CD4-positive, alpha-beta T cell (primary cell): ENCODE measurements at regions of chr4 and their contacts with region 1.

Region 1: DNA sequence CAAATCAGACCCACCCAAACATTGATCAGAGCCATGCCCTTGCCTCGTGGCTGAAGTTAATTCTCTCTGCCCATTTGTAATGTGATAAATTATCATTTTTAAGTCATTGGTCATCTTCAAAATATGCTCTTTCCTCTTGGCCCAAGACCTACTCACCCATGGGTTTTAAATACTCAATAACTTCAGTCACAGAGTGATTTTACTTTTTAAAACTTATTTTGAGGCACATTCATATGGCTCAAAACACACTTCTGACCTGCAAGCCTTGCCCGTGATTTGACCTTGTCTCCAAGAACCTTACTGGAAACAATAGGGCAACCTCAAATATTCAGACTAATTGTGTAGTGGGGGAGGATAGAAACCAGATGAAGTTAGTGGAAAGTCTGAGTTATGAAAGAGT is 176.2 kb upstream of the LNX1 start:
- DNase-seq: no peak
- ATAC-seq: no peak
- H3K4me3 ChIP-seq: no peak overlapping the region
- H3K4me3 Mint-ChIP-seq: no peak overlapping the region
- H3K27ac ChIP-seq: no peak overlapping the region
- H3K27ac Mint-ChIP-seq: no peak overlapping the region
- H3K4me1 ChIP-seq: no peaks in the 10 kb centered on the region
- H3K4me1 Mint-ChIP-seq: no peaks in the 10 kb centered on the region
- H3K27me3 ChIP-seq: no peaks in the 10 kb centered on the region
- H3K27me3 Mint-ChIP-seq: no peaks in the 10 kb centered on the region
- CTCF ChIP-seq: no peak

Region 2: GRCh38 chr4:52431410-52431809 is 1336.1 kb before region 1 on chr4:
- CTCF ChIA-PET with region 1: no interaction called
- POLR2A ChIA-PET with region 1: no interaction called
- intact Hi-C with region 1: loop called in 1 of 2 experiments (anchors 5 kb)
- DNase-seq: no peak
- ATAC-seq: no peak
- H3K4me3 ChIP-seq: no peak overlapping the region
- H3K4me3 Mint-ChIP-seq: no peak overlapping the region
- H3K27ac ChIP-seq: no peak overlapping the region
- H3K27ac Mint-ChIP-seq: no peak overlapping the region
- H3K4me1 ChIP-seq: no peaks in the 10 kb centered on the region
- H3K4me1 Mint-ChIP-seq: no peaks in the 10 kb centered on the region
- H3K27me3 ChIP-seq: no peaks in the 10 kb centered on the region
- H3K27me3 Mint-ChIP-seq: peaks cover 3% of the 10 kb centered on the region
- CTCF ChIP-seq: no peak